ENCODE measurements at regions of chrX and their contacts with region 1.

Region 1: GRCh38 chrX:124223524-124223923 is 108.9 kb upstream of the TEX13D start:
- DNase-seq: peak in 2 of 4 experiments; percentile 21 to 25
- ATAC-seq: peak; percentile 88
- H3K4me3 ChIP-seq: no peak overlapping the region
- H3K27ac ChIP-seq: no peak overlapping the region
- H3K4me1 ChIP-seq: no peaks in the 10 kb centered on the region; a peak in 1 of 5 replicates
- H3K27me3 ChIP-seq: no peaks in the 10 kb centered on the region; a peak in 1 of 5 replicates
- CTCF ChIP-seq: peak; percentile 57 to 62 (median 57)
- EP300 ChIP-seq: no peak
- POLR2A ChIP-seq: no peak
- RAD21 ChIP-seq: peak in 1 of 2 experiments; percentile 50; a peak in 2 of 4 replicates

Region 2: DNA sequence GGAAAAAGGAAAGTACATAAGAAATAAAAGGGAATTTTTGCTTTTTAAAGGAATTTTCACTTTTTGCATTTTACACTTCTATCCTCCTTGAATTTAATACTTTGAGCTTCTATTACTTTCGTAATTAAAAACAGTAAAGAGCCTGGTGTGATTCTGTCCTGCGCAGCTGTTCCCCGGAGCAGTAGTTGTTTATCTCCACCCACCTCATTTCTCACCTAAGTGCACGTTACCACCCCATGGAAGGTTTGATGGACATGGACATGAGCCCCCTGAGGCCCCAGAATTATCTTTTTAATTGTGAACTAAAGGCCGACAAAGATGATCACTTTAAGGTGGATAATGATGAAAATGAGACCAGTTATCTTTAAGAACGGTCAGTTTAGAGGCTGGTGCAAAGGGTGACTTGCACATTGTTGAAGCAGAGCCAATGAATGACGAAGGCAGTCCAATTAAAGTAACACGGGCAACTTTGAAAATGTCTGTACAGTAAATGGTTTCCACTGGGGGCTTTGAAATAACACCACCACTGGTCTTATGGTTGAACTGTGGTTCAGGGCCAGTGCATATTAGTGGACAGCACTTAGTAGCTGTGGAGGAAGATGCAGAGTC is 56.9 kb after region 1 on chrX:
- CTCF ChIA-PET with region 1: no interaction called
- POLR2A ChIA-PET with region 1: no interaction called
- in situ Hi-C with region 1: no loop called
- intact Hi-C with region 1: loop called (anchors 5 kb)
- DNase-seq: peak in 2 of 4 experiments; percentile 7 to 21
- ATAC-seq: peak; percentile 81
- H3K4me3 ChIP-seq: no peak overlapping the region
- H3K27ac ChIP-seq: no peak overlapping the region
- H3K4me1 ChIP-seq: peaks cover 0 to 3% of the 10 kb centered on the region in 2 experiments; a peak in 2 of 5 replicates
- H3K27me3 ChIP-seq: no peaks in the 10 kb centered on the region
- CTCF ChIP-seq: no peak
- EP300 ChIP-seq: no peak
- POLR2A ChIP-seq: no peak
- RAD21 ChIP-seq: no peak

Region 3: GRCh38 chrX:124388562-124388961 is 165.0 kb after region 1 on chrX:
- CTCF ChIA-PET with region 1: no interaction called
- POLR2A ChIA-PET with region 1: no interaction called
- in situ Hi-C with region 1: no loop called
- intact Hi-C with region 1: loop called (anchors 1 kb)
- DNase-seq: peak; percentile 42 to 75 (median 47)
- ATAC-seq: peak; percentile 89
- H3K4me3 ChIP-seq: no peak overlapping the region
- H3K27ac ChIP-seq: no peak overlapping the region
- H3K4me1 ChIP-seq: no peaks in the 10 kb centered on the region
- H3K27me3 ChIP-seq: no peaks in the 10 kb centered on the region
- CTCF ChIP-seq: peak; percentile 58 to 72 (median 60)
- EP300 ChIP-seq: no peak
- POLR2A ChIP-seq: no peak
- RAD21 ChIP-seq: peak; percentile 63 to 72

Region 4: DNA sequence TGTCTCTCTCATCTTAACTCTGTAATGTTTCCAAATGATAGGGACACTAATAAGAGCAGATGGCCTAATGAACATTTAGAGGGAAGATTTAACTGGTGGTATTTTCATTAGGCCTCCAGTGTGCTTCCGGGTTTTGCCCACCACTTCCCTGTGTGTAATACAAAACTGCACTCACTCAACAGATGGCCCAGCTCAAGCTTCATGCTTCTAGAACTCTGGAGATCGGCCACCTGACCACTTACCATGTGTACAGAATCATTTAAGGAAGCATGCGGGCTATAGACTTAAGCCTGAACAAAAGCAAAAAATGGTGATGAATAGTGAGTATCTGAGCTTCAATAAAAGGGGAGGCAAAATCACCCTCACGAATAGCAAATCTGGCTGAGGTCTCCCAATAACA is 212.1 kb after region 1 on chrX:
- CTCF ChIA-PET with region 1: no interaction called
- POLR2A ChIA-PET with region 1: no interaction called
- in situ Hi-C with region 1: no loop called
- intact Hi-C with region 1: no loop called
- DNase-seq: no peak
- ATAC-seq: no peak
- H3K4me3 ChIP-seq: no peak overlapping the region
- H3K27ac ChIP-seq: no peak overlapping the region
- H3K4me1 ChIP-seq: no peaks in the 10 kb centered on the region
- H3K27me3 ChIP-seq: no peaks in the 10 kb centered on the region
- CTCF ChIP-seq: no peak
- EP300 ChIP-seq: no peak
- POLR2A ChIP-seq: no peak
- RAD21 ChIP-seq: no peak

Measured in K562 (cell line).